ENCODE measurements at regions of chr10 and their contacts with region 1.

Region 1: DNA sequence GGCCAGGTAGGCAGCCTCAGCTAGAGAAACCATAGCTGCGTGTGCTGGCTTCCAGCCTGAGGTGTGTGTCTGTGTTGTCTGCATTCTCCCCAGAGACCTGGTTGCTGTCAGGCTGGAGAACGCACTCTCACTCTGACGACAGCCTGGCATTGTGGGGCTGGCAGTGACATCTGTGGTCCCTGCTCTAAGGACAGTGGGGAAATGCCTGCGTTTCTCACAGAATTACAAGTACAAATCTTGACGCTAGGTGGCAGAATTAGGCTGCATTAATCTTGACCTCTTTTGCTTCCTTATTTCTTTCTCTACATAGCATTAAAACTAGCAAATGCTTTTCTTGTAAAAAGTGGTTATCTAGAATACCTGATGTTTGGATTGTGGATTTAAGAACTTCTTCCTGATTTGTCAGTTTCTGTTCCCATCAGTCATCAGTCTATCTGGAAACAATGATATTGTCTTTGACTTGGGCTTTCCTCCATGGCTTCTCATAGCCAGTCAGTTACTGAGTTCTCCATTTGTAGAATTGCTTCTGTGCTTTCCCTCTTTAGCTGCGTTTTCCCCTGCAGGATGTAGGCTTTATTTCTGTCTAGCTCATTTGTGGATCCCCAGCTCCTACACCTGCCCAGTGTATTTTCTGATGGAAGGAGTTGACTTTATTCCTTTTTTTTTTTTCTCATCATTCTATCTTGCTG is 86.0 kb downstream of the FANK1 start:
- H3K4me3 ChIP-seq: no peak overlapping the region
- H3K27ac ChIP-seq: no peak overlapping the region
- H3K4me1 ChIP-seq: no peaks in the 10 kb centered on the region
- CTCF ChIP-seq: peak; percentile 54

Region 2: DNA sequence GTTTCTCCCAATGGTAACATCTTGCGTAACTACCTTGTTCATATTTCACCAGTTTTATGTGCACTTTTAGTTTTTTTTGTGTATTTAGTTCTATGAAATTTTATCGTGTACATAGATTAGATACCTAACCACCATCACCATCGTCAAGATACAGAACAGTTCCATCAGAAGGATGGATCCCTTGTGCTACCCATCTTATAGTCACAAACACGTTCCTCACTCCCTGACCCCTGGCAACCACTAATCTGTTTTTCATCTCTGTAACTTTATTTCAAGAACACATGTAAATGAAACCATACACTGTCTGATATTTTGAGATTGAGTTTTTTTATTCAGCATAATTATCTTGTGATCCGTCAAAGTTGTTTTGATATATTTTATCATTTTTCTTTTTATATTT is 56.2 kb before region 1 on chr10:
- CTCF ChIA-PET with region 1: no interaction called
- POLR2A ChIA-PET with region 1: no interaction called
- H3K4me3 ChIP-seq: no peak overlapping the region
- H3K27ac ChIP-seq: no peak overlapping the region
- H3K4me1 ChIP-seq: no peaks in the 10 kb centered on the region
- CTCF ChIP-seq: no peak

Region 3: GRCh38 chr10:126387023-126387921 is 404.9 kb after region 1 on chr10:
- CTCF ChIA-PET with region 1: interaction called, 11 read pairs
- POLR2A ChIA-PET with region 1: no interaction called
- H3K4me3 ChIP-seq: peak overlapping the region; percentile 46
- H3K27ac ChIP-seq: peak overlapping the region; percentile 75; the same call in 1 of the 2 replicates
- H3K4me1 ChIP-seq: no peaks in the 10 kb centered on the region
- CTCF ChIP-seq: peak; percentile 72; the same call in 1 of the 2 replicates

Region 4: GRCh38 chr10:126504063-126504739 is 521.8 kb after region 1 on chr10:
- CTCF ChIA-PET with region 1: interaction called, 12 read pairs
- POLR2A ChIA-PET with region 1: no interaction called
- H3K4me3 ChIP-seq: no peak overlapping the region
- H3K27ac ChIP-seq: no peak overlapping the region
- H3K4me1 ChIP-seq: no peaks in the 10 kb centered on the region
- CTCF ChIP-seq: no peak

Measured in HEK293 (cell line).